ENCODE measurements at regions of chr11 and their contacts with region 1.

Region 1: GRCh38 chr11:61061081-61061826 is 41.0 kb upstream of the CD5 start:
- DNase-seq: no peak
- ATAC-seq: no peak
- H3K4me3 Mint-ChIP-seq: no peak overlapping the region
- H3K27ac Mint-ChIP-seq: no peak overlapping the region
- H3K4me1 Mint-ChIP-seq: 0 out of 2 replicates have a peak, but pooled peaks cover 3% of the 10 kb centered on the region
- H3K27me3 Mint-ChIP-seq: no peaks in the 10 kb centered on the region
- CTCF ChIP-seq: no peak

Region 2: DNA sequence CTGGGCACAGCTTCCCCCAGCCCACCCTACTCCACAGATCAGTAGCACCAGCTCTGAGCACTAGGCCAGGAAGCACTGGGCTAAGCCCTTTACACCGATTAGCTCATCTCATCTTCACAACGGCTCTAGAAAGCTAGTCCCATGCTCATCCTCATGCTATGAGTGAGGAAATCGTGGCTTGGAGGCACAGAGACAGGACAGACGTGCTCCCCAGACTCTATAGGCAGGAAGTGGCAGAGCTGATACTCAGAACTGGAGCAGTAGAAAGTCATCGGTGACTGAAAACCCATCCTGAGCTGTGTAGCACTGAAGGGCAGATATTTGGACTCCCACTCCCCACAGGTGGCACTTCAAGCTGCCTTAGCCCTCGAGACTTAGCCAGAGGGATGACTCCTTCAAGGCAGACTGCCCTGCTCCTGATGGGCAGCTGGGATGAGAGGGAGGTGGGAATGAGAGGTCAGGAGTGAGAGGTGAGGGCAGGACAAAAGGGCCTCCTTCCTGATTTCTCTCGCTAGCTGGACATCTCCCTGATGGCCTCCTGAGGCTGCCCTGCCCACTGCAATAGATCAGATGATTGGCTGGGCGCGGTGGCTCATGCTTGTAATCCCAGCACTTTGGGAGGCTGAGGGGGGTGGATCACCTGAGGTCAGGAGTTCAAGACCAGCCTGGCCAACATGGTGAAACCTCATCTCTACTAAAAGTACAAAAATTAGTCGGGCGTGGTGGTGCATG is 50.7 kb after region 1 on chr11:
- CTCF ChIA-PET with region 1: interaction called, 3 read pairs
- POLR2A ChIA-PET with region 1: interaction called, 11 read pairs
- DNase-seq: no peak
- ATAC-seq: no peak
- H3K4me3 Mint-ChIP-seq: no peak overlapping the region
- H3K27ac Mint-ChIP-seq: no peak overlapping the region
- H3K4me1 Mint-ChIP-seq: no peaks in the 10 kb centered on the region
- H3K27me3 Mint-ChIP-seq: no peaks in the 10 kb centered on the region
- CTCF ChIP-seq: no peak

Measured in WTC11 (cell line).